Activated CD4-positive, alpha-beta memory T cell treated with anti-CD3 and anti-CD28 coated beads for 36 hours (primary cell): ENCODE measurements at regions of chr18 and their contacts with region 1.

Region 1: GRCh38 chr18:44823782-44824181 is 143.1 kb downstream of the SETBP1 start:
- DNase-seq: peak; percentile 28
- H3K4me3 Mint-ChIP-seq: no peak overlapping the region
- H3K27ac Mint-ChIP-seq: no peak overlapping the region
- H3K4me1 Mint-ChIP-seq: peaks cover 16% of the 10 kb centered on the region
- H3K27me3 Mint-ChIP-seq: peaks cover 20% of the 10 kb centered on the region

Region 2: DNA sequence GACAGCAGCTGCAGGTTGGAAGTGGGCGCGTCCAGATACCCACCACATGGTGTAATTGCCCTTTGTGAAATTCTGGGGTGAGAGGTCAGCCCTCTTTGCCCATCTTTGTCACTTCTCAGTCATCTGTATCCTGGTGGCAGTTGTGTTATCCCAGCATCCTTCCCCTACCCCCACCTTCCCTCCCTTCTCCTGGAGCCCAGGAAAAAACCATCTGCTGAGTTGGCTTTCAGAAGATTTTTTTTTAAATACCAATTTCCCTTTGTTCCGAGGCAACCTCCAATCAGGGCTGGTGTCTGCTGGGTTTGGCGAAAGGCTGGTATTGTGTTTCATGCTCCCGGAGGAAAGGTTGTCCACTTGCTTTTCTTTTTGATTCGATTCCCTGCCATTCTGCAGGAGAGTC is 107.9 kb before region 1 on chr18:
- CTCF ChIA-PET with region 1: no interaction called
- POLR2A ChIA-PET with region 1: no interaction called
- intact Hi-C with region 1: loop called (anchors 2 kb)
- DNase-seq: no peak
- H3K4me3 Mint-ChIP-seq: no peak overlapping the region
- H3K27ac Mint-ChIP-seq: no peak overlapping the region
- H3K4me1 Mint-ChIP-seq: peaks cover 21% of the 10 kb centered on the region
- H3K27me3 Mint-ChIP-seq: peaks cover 7% of the 10 kb centered on the region

Region 3: GRCh38 chr18:44799907-44800421 is 23.8 kb before region 1 on chr18:
- CTCF ChIA-PET with region 1: interaction called, 4 read pairs
- POLR2A ChIA-PET with region 1: interaction called, 3 read pairs
- intact Hi-C with region 1: loop called (anchors 1 kb)
- DNase-seq: no peak
- H3K4me3 Mint-ChIP-seq: no peak overlapping the region
- H3K27ac Mint-ChIP-seq: no peak overlapping the region
- H3K4me1 Mint-ChIP-seq: peaks cover 43% of the 10 kb centered on the region
- H3K27me3 Mint-ChIP-seq: peaks cover 3% of the 10 kb centered on the region

Region 4: GRCh38 chr18:44895176-44895798 is 71.5 kb after region 1 on chr18:
- CTCF ChIA-PET with region 1: interaction called, 3 read pairs
- POLR2A ChIA-PET with region 1: interaction called, 6 read pairs
- intact Hi-C with region 1: loop called (anchors 1 kb)
- DNase-seq: peak; percentile 62
- H3K4me3 Mint-ChIP-seq: no peak overlapping the region
- H3K27ac Mint-ChIP-seq: no peak overlapping the region
- H3K4me1 Mint-ChIP-seq: peaks cover 43% of the 10 kb centered on the region
- H3K27me3 Mint-ChIP-seq: no peaks in the 10 kb centered on the region

Region 5: GRCh38 chr18:45197526-45197970 is 373.8 kb after region 1 on chr18:
- CTCF ChIA-PET with region 1: no interaction called
- POLR2A ChIA-PET with region 1: no interaction called
- intact Hi-C with region 1: loop called (anchors 1 kb)
- DNase-seq: peak; percentile 60
- H3K4me3 Mint-ChIP-seq: no peak overlapping the region
- H3K27ac Mint-ChIP-seq: no peak overlapping the region
- H3K4me1 Mint-ChIP-seq: peaks cover 9% of the 10 kb centered on the region
- H3K27me3 Mint-ChIP-seq: peaks cover 21% of the 10 kb centered on the region